ENCODE measurements at regions of chr11 and their contacts with region 1.

Region 1: GRCh38 chr11:114377612-114378267 is 22.6 kb downstream of the C11orf71 start:
- DNase-seq: peak; percentile 87
- H3K4me3 ChIP-seq: no peak overlapping the region
- CTCF ChIP-seq: no peak

Region 2: GRCh38 chr11:114392735-114393667 is 15.3 kb after region 1 on chr11:
- CTCF ChIA-PET with region 1: interaction called, 15 read pairs
- POLR2A ChIA-PET with region 1: interaction called, 8 read pairs
- DNase-seq: no peak
- H3K4me3 ChIP-seq: no peak overlapping the region
- CTCF ChIP-seq: no peak

Region 3: GRCh38 chr11:114400217-114400914 is 22.6 kb after region 1 on chr11 and contains the starts of genes C11orf71 and RBM7:
- CTCF ChIA-PET with region 1: interaction called, 15 read pairs
- POLR2A ChIA-PET with region 1: interaction called, 8 read pairs
- DNase-seq: peak; percentile 95
- H3K4me3 ChIP-seq: peak within 1 kb of the TSS; percentile 70
- CTCF ChIP-seq: no peak

Measured in AG04449 (cell line).